Activated CD4-positive, alpha-beta memory T cell treated with anti-CD3 and anti-CD28 coated beads, Interleukin-2, amount 10 ng/mL, durations not matched to agents 7 days and 5 days (primary cell): ENCODE measurements at regions of chr17 and their contacts with region 1.

Region 1: DNA sequence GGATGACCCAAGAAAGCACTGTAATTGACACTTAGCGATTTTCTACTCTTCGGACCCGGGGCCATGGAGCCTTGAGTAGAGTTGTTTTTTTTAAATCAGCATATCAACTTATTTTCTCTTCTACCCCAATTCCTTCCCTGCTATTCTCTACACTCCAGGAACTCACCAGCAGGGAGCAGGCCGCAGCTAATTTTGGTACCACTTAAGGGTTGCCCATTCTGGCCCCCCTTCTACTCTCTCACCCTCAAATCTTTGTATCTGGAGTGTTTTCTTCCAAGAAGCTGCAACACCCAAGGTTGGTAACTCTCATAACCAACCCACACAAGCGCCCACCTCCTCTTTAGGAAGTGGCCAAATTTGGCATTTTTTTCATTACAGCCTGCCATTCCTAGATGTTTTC is 5.5 kb upstream of the ERAL1 start:
- DNase-seq: no peak
- H3K4me3 Mint-ChIP-seq: no peak overlapping the region
- H3K27ac Mint-ChIP-seq: no peak overlapping the region
- H3K4me1 Mint-ChIP-seq: peaks cover 6% of the 10 kb centered on the region
- H3K27me3 Mint-ChIP-seq: no peaks in the 10 kb centered on the region

Region 2: DNA sequence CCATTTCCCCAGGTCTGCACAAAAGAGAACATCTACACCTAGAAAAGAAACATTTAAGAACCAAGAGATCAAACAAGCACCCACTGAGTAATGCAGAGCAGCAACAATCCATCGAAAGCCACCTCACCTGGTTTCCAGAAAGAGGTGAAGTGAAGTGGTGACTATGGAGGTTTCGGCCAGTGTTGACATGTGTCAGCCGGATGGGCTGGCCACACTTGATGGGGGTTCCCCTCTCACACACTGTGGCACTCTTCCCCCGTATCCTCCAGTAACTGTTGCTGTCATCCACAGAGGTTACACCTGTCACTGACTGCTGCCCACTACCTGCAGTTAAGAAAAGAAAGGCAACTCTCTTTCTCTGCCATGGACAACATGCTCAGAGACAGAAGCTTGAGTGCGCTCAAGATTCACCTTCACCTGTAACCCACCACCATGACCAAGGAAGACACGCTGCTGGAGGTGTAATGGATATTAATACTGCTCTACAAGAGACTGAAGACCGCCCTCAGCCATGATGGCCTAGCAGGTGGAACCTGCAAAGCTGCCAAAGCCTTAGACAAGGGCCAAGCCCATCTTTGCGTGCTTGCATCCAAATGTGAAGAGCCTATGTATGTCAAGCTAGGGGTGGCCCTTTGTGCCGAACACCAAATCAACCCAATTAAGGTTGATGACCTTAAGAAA is 194.0 kb before region 1 on chr17:
- CTCF ChIA-PET with region 1: no interaction called
- POLR2A ChIA-PET with region 1: no interaction called
- DNase-seq: no peak
- H3K4me3 Mint-ChIP-seq: no peak overlapping the region
- H3K27ac Mint-ChIP-seq: no peak overlapping the region
- H3K4me1 Mint-ChIP-seq: peaks cover 13% of the 10 kb centered on the region
- H3K27me3 Mint-ChIP-seq: no peaks in the 10 kb centered on the region

Region 3: DNA sequence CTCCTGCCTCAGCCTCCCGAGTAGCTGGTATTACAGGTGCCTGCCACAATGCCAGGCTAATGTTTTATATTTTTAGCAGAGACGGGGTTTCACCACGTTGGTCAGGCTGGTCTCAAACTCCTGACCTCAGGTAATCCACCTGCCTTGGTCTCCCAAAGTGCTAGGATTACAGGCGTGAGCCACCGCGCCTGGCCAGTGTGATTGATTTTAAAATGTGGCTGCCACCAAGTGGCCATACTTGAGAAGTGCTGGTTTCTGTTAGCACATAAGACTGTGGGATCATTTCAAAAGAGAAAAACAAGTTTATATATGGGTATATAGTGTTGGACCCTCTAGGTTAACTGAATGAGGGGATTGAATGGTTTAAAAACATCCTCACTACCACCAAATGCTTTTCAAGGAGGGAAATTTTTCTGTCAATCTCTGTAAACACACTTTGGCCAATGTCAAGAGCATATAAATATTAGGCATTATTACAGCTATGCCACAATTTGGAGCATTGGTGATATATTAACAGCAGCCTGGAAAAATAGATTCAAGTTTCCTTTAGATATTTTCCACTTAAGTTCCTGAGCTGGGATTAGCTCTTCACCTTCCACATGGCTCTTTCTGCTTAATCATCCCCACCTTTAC is 67.1 kb after region 1 on chr17:
- CTCF ChIA-PET with region 1: interaction called, 11 read pairs
- POLR2A ChIA-PET with region 1: interaction called, 4 read pairs
- DNase-seq: peak; percentile 46
- H3K4me3 Mint-ChIP-seq: no peak overlapping the region
- H3K27ac Mint-ChIP-seq: no peak overlapping the region
- H3K4me1 Mint-ChIP-seq: peaks cover 8% of the 10 kb centered on the region
- H3K27me3 Mint-ChIP-seq: no peaks in the 10 kb centered on the region